ENCODE measurements at regions of chr11 and their contacts with region 1.

Region 1: GRCh38 chr11:66288671-66289547 is at the start of gene YIF1A:
- DNase-seq: peak; percentile 99
- H3K4me3 Mint-ChIP-seq: peak within 1 kb of the TSS; percentile 92
- H3K27ac Mint-ChIP-seq: peak within 1 kb of the TSS; percentile 83
- H3K4me1 Mint-ChIP-seq: peaks cover 42% of the 10 kb centered on the region
- H3K27me3 Mint-ChIP-seq: peaks cover 27% of the 10 kb centered on the region
- total RNA-seq, gene YIF1A: 49.5 to 52.5 TPM

Region 2: GRCh38 chr11:66268283-66268951 is 20.5 kb before region 1 on chr11 and contains the start of gene RAB1B:
- CTCF ChIA-PET with region 1: interaction called, 44 read pairs
- POLR2A ChIA-PET with region 1: interaction called, 23 read pairs
- DNase-seq: peak; percentile 100
- H3K4me3 Mint-ChIP-seq: peak within 1 kb of the TSS; percentile 98
- H3K27ac Mint-ChIP-seq: peak within 1 kb of the TSS; percentile 91
- H3K4me1 Mint-ChIP-seq: peaks cover 48% of the 10 kb centered on the region
- H3K27me3 Mint-ChIP-seq: no peaks in the 10 kb centered on the region
- total RNA-seq, gene RAB1B: 146 to 150 TPM

Region 3: GRCh38 chr11:66277471-66278362 is 11.2 kb before region 1 on chr11 and contains the start of gene CNIH2:
- CTCF ChIA-PET with region 1: interaction called, 44 read pairs
- POLR2A ChIA-PET with region 1: interaction called, 17 read pairs
- DNase-seq: peak; percentile 49
- H3K4me3 Mint-ChIP-seq: peak within 1 kb of the TSS; percentile 24
- H3K27ac Mint-ChIP-seq: no peak within 1 kb of the TSS
- H3K4me1 Mint-ChIP-seq: peaks cover 38% of the 10 kb centered on the region
- H3K27me3 Mint-ChIP-seq: peaks cover 16% of the 10 kb centered on the region
- total RNA-seq, gene CNIH2: 1.9 to 2.1 TPM